ENCODE measurements at regions of chr1 and their contacts with region 1.

Region 1: GRCh38 chr1:173202430-173203145 is 4.5 kb downstream of the TNFSF4 start:
- H3K4me3 Mint-ChIP-seq: no peak overlapping the region
- H3K27ac Mint-ChIP-seq: no peak overlapping the region
- H3K4me1 Mint-ChIP-seq: peaks cover 26% of the 10 kb centered on the region
- H3K27me3 Mint-ChIP-seq: peaks cover 17% of the 10 kb centered on the region

Region 2: DNA sequence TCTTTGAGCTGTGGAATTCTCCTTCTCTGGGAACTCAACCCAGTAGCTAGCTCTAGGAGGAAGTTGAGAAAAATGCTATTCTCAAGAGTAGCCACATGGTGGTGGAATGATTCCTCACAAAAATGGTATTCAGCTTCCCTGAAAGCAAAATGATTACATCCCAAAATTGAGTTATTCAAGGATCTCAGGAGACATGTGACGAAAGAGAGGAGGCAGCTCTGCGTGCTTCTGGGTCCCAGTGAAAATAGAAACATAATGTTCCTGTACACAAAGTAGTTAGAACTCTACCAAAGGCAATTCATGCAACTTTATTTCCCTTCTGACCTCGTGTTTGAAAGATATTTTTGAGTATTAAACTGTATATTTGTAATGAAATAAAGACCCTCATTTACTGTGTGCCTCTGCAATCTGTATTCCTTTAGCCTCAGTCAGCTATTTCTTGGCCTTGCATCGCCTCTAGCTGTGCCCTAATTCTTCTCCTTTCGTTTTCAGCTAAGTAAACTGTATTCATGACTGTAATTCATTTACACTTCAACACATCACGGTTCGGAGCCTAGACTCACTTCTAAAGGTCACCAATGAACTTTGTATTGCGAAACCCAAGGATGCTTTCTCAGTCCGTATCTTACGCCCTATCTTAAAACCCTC is 376.4 kb before region 1 on chr1:
- intact Hi-C with region 1: loop called (anchors 1 kb)
- H3K4me3 Mint-ChIP-seq: no peak overlapping the region
- H3K27ac Mint-ChIP-seq: no peak overlapping the region
- H3K4me1 Mint-ChIP-seq: peaks cover 5% of the 10 kb centered on the region
- H3K27me3 Mint-ChIP-seq: no peaks in the 10 kb centered on the region

Region 3: GRCh38 chr1:173020138-173020750 is 182.3 kb before region 1 on chr1:
- intact Hi-C with region 1: loop called (anchors 5 kb)
- H3K4me3 Mint-ChIP-seq: peak overlapping the region; percentile 17
- H3K27ac Mint-ChIP-seq: peak overlapping the region; percentile 88
- H3K4me1 Mint-ChIP-seq: peaks cover 49% of the 10 kb centered on the region
- H3K27me3 Mint-ChIP-seq: no peaks in the 10 kb centered on the region

Region 4: GRCh38 chr1:173050865-173051264 is 151.7 kb before region 1 on chr1 and contains the start of gene TNFSF18:
- intact Hi-C with region 1: loop called (anchors 10 kb)
- H3K4me3 Mint-ChIP-seq: peak within 1 kb of the TSS; percentile 21
- H3K27ac Mint-ChIP-seq: peak within 1 kb of the TSS; percentile 72
- H3K4me1 Mint-ChIP-seq: peaks cover 31% of the 10 kb centered on the region
- H3K27me3 Mint-ChIP-seq: no peaks in the 10 kb centered on the region

Region 5: GRCh38 chr1:173409613-173410012 is 207.0 kb after region 1 on chr1:
- intact Hi-C with region 1: loop called (anchors 2 kb)
- H3K4me3 Mint-ChIP-seq: no peak overlapping the region
- H3K27ac Mint-ChIP-seq: no peak overlapping the region
- H3K4me1 Mint-ChIP-seq: peaks cover 54% of the 10 kb centered on the region
- H3K27me3 Mint-ChIP-seq: peaks cover 3% of the 10 kb centered on the region

Measured in dendritic cell treated with granulocyte-macrophage colony-stimulating factor and Interleukin-4, amounts not matched to agents 40 ng/mL and 50 ng/mL, for 4 days (primary cell).